IMR-90 (cell line): ENCODE measurements at regions of chr3 and their contacts with region 1.

Region 1: GRCh38 chr3:157248590-157249422 is 88.9 kb upstream of the CCNL1 start:
- DNase-seq: peak; percentile 94
- ATAC-seq: peak; percentile 94
- H3K4me3 ChIP-seq: no peak overlapping the region
- H3K27ac ChIP-seq: peak overlapping the region; percentile 23; the same call in 1 of the 2 replicates
- H3K4me1 ChIP-seq: peaks cover 11% of the 10 kb centered on the region
- H3K27me3 ChIP-seq: no peaks in the 10 kb centered on the region
- CTCF ChIP-seq: no peak
- POLR2A ChIP-seq: no peak
- RAD21 ChIP-seq: no peak

Region 2: DNA sequence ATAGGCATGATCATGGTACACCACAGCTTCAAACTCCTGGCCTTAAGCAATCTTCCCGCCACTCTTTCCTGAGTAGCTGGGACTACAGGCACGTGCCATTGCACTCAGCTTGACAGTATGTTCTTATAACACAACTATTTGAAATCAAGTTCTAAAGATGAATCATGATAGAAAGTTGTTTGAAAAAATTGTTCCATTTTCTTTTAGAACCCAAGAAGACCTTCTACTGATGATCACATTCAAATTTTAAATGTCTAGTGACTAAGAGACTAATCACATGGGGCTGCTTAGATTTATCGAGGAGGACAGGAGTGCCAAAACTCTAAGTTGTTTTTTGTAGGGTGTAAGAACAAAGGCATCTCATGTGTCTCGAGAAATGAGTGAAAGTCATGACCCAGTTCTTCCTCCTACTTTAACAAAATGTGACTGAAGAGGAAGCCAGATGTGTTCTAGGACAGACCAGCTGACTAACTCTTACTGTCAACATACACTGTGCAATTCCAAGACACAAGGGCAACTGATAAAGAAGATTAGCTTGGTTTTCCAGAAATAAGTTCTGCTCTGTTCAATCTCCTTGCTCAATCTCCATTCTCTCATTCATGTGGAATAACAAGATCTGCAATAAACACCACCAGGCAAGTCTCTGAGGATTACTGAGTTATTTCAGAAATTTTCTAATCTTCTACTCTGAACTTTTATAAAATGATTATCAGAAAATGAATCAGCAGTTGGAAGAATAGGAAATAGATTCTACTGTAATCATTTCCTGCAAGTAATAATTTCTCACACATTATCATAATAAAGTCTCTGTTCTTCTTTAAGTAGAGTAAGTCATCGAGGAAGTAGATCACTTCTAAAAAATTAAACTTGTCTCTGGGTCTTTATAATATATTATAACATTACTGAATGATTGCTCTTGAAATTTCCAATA is 33.7 kb after region 1 on chr3:
- CTCF ChIA-PET with region 1: no interaction called
- POLR2A ChIA-PET with region 1: no interaction called
- dilution Hi-C with region 1: no loop called
- in situ Hi-C with region 1: no loop called
- intact Hi-C with region 1: loop called (anchors 5 kb)
- DNase-seq: peak; percentile 93
- ATAC-seq: peak; percentile 86
- H3K4me3 ChIP-seq: no peak overlapping the region
- H3K27ac ChIP-seq: peak overlapping the region; percentile 18; the same call in 1 of the 2 replicates
- H3K4me1 ChIP-seq: no peaks in the 10 kb centered on the region
- H3K27me3 ChIP-seq: no peaks in the 10 kb centered on the region
- CTCF ChIP-seq: no peak
- POLR2A ChIP-seq: no peak
- RAD21 ChIP-seq: no peak